ENCODE measurements at regions of chr2 and their contacts with region 1.

Region 1: DNA sequence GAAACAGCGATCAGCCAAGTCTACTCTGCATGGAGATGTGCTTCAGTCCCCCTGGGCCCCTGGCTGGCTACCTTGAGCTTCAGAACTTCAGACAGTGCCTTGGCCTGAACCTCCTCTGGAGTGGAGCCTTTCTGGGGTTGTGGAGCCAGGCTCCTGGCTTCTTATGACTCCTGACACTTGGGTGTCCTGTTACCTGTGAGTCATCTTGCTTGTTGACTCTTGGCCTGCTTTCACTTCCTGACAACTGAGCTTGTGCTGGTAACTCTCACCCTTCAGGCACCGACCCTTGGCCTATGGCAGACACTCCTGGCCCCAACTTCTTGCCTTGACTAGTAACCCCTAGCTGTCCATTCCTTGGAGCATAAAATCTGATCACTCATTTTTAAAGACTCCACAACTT is 46.5 kb upstream of the VIT start:
- DNase-seq: peak; percentile 53 to 56
- H3K4me3 ChIP-seq: no peak overlapping the region
- H3K27ac ChIP-seq: peak overlapping the region; percentile 58 to 68
- H3K4me1 ChIP-seq: no peaks in the 10 kb centered on the region
- H3K27me3 ChIP-seq: no peaks in the 10 kb centered on the region
- CTCF ChIP-seq: no peak
- POLR2A ChIP-seq: no peak

Region 2: GRCh38 chr2:37052600-37053332 is 402.7 kb after region 1 on chr2:
- intact Hi-C with region 1: loop called (anchors 5 kb)
- DNase-seq: no peak
- H3K4me3 ChIP-seq: no peak overlapping the region
- H3K27ac ChIP-seq: peak overlapping the region in 1 of 2 donors; percentile 51
- H3K4me1 ChIP-seq: no peaks in the 10 kb centered on the region
- H3K27me3 ChIP-seq: no peaks in the 10 kb centered on the region
- CTCF ChIP-seq: no peak
- POLR2A ChIP-seq: no peak

Measured in breast epithelium (tissue), 4 donors.